ENCODE measurements at regions of chr1 and their contacts with region 1.

Region 1: DNA sequence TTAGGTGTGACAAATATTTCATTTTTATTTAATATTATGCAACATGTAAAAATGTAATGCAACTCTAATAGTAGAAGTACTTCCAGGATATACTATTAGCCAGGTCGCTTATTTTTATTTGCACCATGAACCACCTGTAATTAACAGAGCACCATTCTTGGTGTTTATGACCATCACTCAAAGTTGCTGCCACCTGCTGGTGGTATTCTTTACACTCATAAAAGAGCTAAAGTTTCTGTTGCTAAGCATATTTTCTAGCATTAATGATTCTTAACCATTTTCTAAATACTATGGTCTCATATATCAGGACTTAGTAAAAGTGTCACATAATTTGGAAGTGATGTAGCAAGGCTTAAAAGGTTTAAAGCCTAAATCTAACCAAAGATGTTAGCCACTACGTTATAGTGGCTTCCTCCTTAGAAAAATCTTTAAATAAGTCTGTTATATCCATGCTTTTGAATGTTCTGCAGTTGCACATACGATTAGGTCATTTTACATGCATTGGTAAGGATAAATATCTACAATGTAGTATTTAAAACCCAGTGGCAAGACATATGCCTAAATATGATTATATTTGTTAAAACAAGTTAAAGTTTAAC is 244.5 kb downstream of the NEGR1 start:
- DNase-seq: no peak
- ATAC-seq: no peak

Region 2: DNA sequence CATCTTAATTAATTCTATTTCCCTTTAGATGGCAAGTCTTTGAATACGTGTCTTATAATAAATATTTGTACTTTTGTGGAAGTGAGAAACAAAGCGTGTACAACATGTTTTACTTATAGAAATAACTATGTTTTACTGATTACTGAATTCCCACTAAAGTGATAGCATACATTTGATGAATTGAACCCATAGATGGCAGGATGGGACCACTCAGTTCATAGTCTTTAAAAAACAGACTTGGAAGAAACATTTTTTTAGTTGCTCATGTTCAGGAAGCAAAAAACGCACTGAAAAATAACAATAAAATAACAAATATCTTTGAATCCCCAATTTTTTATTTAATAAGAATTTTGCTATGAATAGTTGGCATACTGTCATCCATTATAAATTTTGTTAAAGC is 449.9 kb before region 1 on chr1:
- intact Hi-C with region 1: loop called (anchors 5 kb)
- DNase-seq: no peak
- ATAC-seq: peak; percentile 84

Region 3: GRCh38 chr1:71603044-71603776 is 434.6 kb before region 1 on chr1:
- intact Hi-C with region 1: no loop called
- DNase-seq: no peak
- ATAC-seq: no peak

Measured in Right ventricle myocardium superior (tissue), 1 donor.